ENCODE measurements at regions of chr16 and their contacts with region 1.

Region 1: DNA sequence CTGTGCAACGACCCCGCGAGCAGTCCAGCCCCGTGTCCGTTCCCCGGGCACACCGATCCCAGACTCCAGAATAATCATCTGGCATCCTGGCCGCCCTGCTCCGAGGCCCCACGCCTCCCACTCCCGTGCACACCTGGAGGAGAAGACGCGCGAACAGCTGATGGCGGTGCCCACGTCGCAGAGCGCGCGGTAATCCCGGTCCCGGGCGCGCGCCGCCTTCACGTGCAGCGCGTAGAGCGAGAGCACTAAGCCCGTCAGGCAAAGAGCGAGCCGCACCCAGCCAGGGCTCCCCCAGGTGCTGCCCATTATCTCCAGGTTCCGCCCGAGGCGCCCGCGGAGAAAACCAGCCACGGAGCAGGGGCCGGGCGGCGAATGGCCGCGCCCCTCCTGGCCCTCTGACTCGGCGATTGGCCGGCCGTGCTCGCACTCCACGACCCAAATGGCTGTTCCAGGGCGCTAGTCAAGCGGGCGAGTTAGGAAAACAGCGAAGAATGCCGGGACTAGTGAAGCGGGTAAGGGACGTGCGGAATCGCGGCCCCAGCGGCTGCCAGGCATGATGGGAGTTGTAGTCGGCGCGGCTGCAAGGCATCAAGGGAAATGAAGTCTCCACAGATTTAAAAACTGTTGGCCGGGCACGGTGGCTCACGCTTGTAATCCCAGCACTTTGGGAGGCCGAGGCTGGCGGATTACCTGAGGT is at the start of gene VKORC1:
- DNase-seq: peak; percentile 89
- ATAC-seq: peak; percentile 98
- H3K4me3 ChIP-seq: peak within 1 kb of the TSS; percentile 92 to 97
- H3K27ac ChIP-seq: peak within 1 kb of the TSS; percentile 87
- H3K4me1 ChIP-seq: peaks cover 7% of the 10 kb centered on the region; the same call in 1 of the 2 replicates
- H3K27me3 ChIP-seq: no peaks in the 10 kb centered on the region
- CTCF ChIP-seq: no peak
- total RNA-seq, gene VKORC1: 109 TPM

Region 2: DNA sequence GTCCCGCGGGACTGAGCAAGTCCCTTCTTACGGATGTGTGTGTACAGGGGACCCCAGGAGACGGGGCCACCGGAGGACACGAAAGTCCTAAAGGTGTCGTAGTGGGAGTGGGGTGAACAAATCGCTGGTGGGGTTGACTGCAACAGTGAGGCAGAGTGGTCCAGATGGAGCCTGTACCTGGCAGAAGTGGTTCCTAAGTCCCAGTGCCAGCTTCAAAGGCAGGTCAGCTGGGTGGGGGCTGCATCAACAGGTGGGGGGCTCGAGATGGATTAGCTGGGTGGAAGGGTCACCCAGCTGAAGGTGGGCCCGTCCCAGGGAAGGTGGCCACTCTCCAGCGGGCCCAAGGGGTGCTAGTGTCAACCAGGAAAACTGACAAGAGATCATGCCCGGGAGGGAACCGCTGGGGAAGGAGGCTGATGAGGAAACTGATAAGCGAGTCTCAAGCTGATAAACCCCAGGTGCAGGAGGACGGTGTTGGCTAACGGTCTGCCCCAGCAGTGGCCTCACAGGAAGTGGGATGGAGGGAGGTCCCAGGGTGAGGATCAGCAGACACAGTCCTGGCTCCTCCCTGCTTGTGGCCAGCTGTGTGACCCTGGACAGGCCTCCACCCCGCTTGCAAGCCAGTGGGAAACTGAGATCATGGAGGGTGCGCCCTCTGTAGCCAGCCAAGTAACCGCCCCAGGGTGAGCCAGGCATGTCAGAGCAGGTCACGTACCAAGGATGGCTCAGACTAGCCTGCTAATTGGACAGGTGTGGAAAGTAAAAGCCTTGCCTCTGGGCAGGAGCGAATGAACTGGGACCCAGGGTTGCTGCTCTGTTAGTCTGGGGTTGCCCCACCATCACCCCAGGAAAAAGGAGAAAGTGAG is 144.7 kb before region 1 on chr16:
- CTCF ChIA-PET with region 1: no interaction called
- POLR2A ChIA-PET with region 1: no interaction called
- in situ Hi-C with region 1: no loop called
- intact Hi-C with region 1: loop called (anchors 5 kb)
- DNase-seq: no peak
- ATAC-seq: peak; percentile 41
- H3K4me3 ChIP-seq: peak overlapping the region; percentile 82 to 92
- H3K27ac ChIP-seq: peak overlapping the region; percentile 95
- H3K4me1 ChIP-seq: peaks cover 43% of the 10 kb centered on the region
- H3K27me3 ChIP-seq: no peaks in the 10 kb centered on the region
- CTCF ChIP-seq: no peak; the same call in 1 of the 2 replicates

Region 3: DNA sequence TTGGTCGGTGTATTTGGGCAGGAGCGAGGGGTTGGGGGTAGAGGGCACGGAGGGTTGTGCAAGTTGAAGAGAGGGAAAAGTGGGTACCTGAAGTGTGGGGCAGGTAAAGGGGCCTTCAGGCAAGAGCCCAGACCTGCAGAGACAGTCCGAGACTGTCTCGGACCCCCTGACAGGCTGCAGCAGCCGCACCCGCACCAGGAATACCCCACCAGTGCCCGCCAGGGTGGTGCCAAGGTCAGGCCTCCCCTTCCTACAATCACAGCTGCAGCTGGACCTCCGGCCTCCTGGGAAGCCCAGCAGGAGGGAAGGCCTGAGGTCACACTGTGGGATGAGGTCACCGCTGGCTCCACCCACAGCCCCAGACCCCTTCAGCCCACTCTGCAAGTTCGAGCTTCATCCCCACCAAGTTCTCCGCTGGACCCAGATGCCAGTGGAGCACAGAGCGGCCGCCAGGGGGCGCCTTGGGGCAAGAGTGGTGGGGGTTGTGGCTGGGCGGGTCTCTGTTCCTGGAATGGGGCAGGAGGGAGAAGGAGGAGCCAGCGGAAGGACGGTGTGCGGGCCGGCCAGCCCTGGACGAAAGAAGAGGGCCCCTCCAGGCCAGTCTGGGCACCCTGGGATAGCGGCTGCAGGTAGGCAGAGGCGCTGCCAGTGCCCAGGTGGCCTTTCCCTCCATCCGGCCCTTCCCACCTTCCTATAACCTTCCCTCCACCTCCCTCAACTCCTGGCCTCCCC is 109.7 kb before region 1 on chr16 and contains the start of gene HSD3B7:
- CTCF ChIA-PET with region 1: no interaction called
- POLR2A ChIA-PET with region 1: no interaction called
- in situ Hi-C with region 1: no loop called
- intact Hi-C with region 1: loop called (anchors 5 kb)
- DNase-seq: peak; percentile 51
- ATAC-seq: peak; percentile 90
- H3K4me3 ChIP-seq: peak within 1 kb of the TSS; percentile 4 to 39; a peak in 2 of 4 replicates
- H3K27ac ChIP-seq: no peak within 1 kb of the TSS
- H3K4me1 ChIP-seq: peaks cover 9% of the 10 kb centered on the region
- H3K27me3 ChIP-seq: no peaks in the 10 kb centered on the region
- CTCF ChIP-seq: peak; percentile 97
- total RNA-seq, gene HSD3B7: 5.4 TPM

Region 4: GRCh38 chr16:31032736-31033708 is 61.5 kb before region 1 on chr16 and contains the start of gene STX4:
- CTCF ChIA-PET with region 1: no interaction called
- POLR2A ChIA-PET with region 1: no interaction called
- in situ Hi-C with region 1: no loop called
- intact Hi-C with region 1: loop called (anchors 10 kb)
- DNase-seq: peak; percentile 96
- ATAC-seq: peak; percentile 89
- H3K4me3 ChIP-seq: peak within 1 kb of the TSS; percentile 85 to 98
- H3K27ac ChIP-seq: peak within 1 kb of the TSS; percentile 94
- H3K4me1 ChIP-seq: peaks cover 7% of the 10 kb centered on the region; the same call in 1 of the 2 replicates
- H3K27me3 ChIP-seq: no peaks in the 10 kb centered on the region
- CTCF ChIP-seq: no peak
- total RNA-seq, gene STX4: 65.2 TPM